GM12878 (cell line): ENCODE measurements at regions of chr1 and their contacts with region 1.

Region 1: DNA sequence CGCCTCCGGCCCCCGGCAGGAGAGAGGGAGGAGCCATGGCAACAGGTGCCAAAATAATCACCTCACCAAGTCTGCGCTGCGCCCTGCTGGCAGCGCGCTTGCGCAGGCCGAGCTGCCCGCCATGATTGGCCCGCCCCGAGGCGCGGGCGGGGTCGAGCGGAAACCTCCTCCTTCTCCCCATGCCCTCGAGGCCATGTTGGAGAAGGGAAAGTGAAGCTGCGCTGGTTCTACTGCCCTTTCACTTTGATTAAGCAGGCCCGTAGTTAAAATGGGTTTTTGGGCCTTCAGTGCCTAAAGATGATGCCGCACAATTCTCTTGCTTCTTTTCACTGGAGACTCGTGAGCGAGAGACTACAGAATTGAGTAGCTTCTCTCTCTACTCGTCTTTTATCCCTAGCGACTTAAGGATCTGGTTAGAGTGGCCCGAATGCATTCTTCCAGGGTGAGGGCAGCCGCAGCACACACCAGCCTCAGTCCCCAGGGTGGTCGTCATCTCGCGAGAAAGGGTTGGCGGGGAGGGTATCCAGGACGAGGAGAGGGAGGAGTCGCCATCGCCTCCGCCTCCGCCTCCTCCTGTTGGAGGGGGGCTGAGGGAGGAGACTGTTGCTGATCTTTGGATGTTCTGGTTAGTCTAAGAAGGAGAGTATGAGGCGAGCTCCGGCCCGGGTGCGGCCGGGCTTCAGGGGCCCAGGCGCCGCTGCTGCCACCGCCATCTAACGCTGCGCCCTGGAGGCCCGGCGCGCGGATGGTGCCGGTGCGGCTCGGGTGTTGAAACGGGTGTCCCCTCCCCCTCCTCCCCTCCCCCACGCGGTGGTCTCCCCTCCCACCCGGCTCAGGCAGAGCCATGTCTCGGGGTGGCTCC is at the start of gene DCAF6:
- DNase-seq: peak; percentile 98
- ATAC-seq: peak; percentile 82
- H3K4me3 ChIP-seq: peak within 1 kb of the TSS; percentile 95
- H3K27ac ChIP-seq: peak within 1 kb of the TSS; percentile 99
- H3K4me1 ChIP-seq: no peaks in the 10 kb centered on the region
- H3K27me3 ChIP-seq: no peaks in the 10 kb centered on the region
- CTCF ChIP-seq: no peak
- EP300 ChIP-seq: no peak
- POLR2A ChIP-seq: peak; percentile 77
- RAD21 ChIP-seq: no peak
- polyA plus RNA-seq, gene DCAF6: 11.4 to 18.3 TPM

Region 2: DNA sequence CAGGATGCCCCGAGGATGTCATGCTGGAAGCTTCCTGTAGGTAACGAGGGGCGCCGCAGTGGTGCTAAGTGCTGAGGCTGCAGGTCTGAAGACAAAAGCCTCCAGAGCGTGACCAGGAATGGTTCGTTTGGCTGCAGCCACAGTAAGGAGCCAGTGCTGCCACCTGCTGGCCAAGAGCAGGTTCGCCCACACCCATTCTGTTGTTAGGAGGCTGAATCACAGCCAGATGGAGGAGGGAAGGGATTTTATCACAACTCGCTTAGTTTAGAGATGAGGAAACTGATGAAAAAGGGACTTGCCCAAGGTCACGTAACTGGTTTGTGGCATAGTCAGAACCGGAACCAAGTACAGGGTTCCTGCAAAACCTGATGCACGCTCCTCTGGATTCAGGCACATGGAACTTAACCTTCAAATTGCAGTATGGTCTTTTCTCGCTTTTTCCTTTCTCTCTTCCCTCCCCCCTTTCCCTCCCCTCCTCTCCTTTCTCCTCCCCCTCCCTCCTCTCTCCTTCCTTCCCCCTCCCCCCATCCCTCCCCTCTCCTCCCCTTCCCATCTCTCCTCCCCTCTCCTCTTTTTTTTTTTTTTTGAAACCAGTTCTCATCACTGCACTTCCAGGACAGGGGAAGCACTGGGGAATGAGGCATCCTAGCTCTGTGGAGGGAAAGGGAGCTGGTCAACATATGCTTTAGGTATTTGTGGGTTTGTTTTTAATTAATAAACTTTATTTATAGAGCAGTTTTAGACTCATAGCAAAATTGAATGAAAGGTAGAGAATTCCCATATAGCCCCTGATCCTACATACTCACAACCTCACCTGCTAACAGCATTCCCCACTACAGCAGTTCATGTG is 132.7 kb before region 1 on chr1:
- CTCF ChIA-PET with region 1: no interaction called
- POLR2A ChIA-PET with region 1: no interaction called
- RAD21 ChIA-PET with region 1: no interaction called
- SMC1A ChIA-PET with region 1: no interaction called
- in situ Hi-C with region 1: no loop called
- intact Hi-C with region 1: loop called (anchors 5 kb)
- DNase-seq: peak; percentile 82
- ATAC-seq: peak; percentile 100
- H3K4me3 ChIP-seq: no peak overlapping the region
- H3K27ac ChIP-seq: no peak overlapping the region
- H3K4me1 ChIP-seq: peaks cover 12% of the 10 kb centered on the region
- H3K27me3 ChIP-seq: no peaks in the 10 kb centered on the region
- CTCF ChIP-seq: peak; percentile 95 to 100 (median 95); a peak in 5 of 6 replicates
- EP300 ChIP-seq: no peak
- POLR2A ChIP-seq: no peak
- RAD21 ChIP-seq: peak; percentile 84

Region 3: DNA sequence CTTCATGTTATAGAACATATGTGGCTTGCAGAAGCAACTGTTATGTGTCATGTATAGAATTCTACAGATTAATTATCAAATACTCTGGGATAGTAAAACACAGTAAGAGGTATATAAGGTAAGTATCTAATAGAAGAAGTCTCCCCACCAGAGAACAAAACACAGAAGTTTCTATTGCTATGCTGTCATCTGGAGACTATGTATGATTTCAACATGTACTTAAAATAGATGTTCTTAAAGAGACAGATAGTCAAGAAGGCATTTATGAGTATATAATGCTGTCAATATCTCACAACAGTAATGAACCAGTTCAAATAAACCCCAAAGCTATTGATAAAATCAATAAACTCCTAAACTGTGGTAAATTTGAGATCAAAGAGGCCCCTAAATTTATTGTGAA is 14.3 kb before region 1 on chr1:
- CTCF ChIA-PET with region 1: interaction called, 9 read pairs
- POLR2A ChIA-PET with region 1: interaction called, 20 read pairs
- RAD21 ChIA-PET with region 1: interaction called, 12 read pairs
- SMC1A ChIA-PET with region 1: interaction called, 10 read pairs
- in situ Hi-C with region 1: no loop called
- intact Hi-C with region 1: no loop called
- DNase-seq: no peak
- ATAC-seq: peak; percentile 76
- H3K4me3 ChIP-seq: no peak overlapping the region
- H3K27ac ChIP-seq: no peak overlapping the region
- H3K4me1 ChIP-seq: peaks cover 5% of the 10 kb centered on the region; the same call in 1 of the 2 replicates
- H3K27me3 ChIP-seq: no peaks in the 10 kb centered on the region
- CTCF ChIP-seq: no peak
- EP300 ChIP-seq: no peak
- POLR2A ChIP-seq: no peak
- RAD21 ChIP-seq: no peak

Region 4: DNA sequence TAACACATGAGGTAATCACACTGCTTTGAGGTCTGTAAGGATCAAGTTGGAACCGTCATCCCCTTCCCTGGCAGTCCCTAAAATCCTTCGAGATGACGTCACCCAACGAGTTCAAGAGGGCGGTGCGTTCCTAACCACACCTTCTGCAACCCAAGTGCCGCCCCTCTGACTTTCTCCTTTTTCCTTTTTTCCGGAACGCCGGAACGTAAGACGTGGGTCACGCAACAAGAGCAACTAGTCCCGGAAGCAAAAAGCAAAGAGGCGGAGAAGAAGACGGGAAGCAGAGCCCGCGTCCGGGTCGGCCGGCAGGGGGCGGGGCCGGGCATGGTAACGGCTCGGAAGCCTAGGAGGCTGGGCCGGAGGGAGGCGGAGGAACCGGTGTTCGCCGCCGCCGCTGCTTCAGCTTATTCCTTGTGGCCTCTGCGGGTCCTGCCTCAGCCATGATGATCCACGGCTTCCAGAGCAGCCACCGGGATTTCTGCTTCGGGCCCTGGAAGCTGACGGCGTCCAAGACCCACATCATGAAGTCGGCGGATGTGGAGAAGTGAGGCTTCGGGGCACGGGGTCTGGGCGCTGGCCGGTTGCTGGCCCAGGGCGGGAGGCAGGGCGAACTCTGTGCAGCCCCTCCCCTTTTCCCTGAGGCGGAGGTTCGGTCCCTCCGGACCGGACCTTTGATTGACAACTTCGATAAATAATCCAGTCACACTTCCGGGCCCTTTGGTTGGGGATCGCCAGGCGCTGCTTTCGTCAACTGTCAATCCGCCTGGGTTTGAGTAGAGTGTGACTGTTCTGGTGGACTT is 242.5 kb after region 1 on chr1 and contains the start of gene TIPRL:
- CTCF ChIA-PET with region 1: no interaction called
- POLR2A ChIA-PET with region 1: no interaction called
- RAD21 ChIA-PET with region 1: no interaction called
- SMC1A ChIA-PET with region 1: no interaction called
- in situ Hi-C with region 1: no loop called
- intact Hi-C with region 1: loop called (anchors 10 kb)
- DNase-seq: peak; percentile 89
- ATAC-seq: peak; percentile 93
- H3K4me3 ChIP-seq: peak within 1 kb of the TSS; percentile 91
- H3K27ac ChIP-seq: peak within 1 kb of the TSS; percentile 95
- H3K4me1 ChIP-seq: no peaks in the 10 kb centered on the region; the same call in 1 of the 2 replicates
- H3K27me3 ChIP-seq: no peaks in the 10 kb centered on the region
- CTCF ChIP-seq: peak; percentile 36 to 54 (median 51); a peak in 5 of 6 replicates
- EP300 ChIP-seq: no peak
- POLR2A ChIP-seq: peak; percentile 90
- RAD21 ChIP-seq: peak; percentile 25; the same call in 1 of the 2 replicates
- polyA plus RNA-seq, gene TIPRL: 51.9 to 57.9 TPM

Region 5: DNA sequence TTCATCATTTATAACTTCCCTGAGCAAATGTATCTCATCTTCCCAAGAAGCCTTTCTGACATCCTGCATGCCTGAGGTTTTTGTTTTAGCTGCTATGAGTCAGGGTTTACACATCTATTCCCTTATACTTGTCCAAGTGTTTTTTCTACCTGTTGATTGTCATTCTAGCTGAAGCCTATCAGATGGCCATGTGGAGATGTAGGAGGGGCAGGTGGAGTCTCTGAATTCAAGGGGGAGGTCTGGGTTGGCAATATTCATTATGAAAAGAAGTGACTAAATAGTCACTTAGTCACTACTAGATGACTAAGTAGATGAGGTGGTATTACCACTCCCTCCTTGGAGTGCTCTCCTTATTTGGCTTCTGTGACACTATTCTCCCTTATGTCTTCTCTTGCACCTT is 692.5 kb after region 1 on chr1:
- CTCF ChIA-PET with region 1: no interaction called
- POLR2A ChIA-PET with region 1: no interaction called
- RAD21 ChIA-PET with region 1: no interaction called
- SMC1A ChIA-PET with region 1: no interaction called
- in situ Hi-C with region 1: no loop called
- intact Hi-C with region 1: no loop called
- DNase-seq: no peak
- ATAC-seq: no peak
- H3K4me3 ChIP-seq: no peak overlapping the region
- H3K27ac ChIP-seq: no peak overlapping the region
- H3K4me1 ChIP-seq: no peaks in the 10 kb centered on the region
- H3K27me3 ChIP-seq: no peaks in the 10 kb centered on the region
- CTCF ChIP-seq: no peak
- EP300 ChIP-seq: no peak
- POLR2A ChIP-seq: no peak
- RAD21 ChIP-seq: no peak